ENCODE measurements at regions of chr9 and their contacts with region 1.

Region 1: DNA sequence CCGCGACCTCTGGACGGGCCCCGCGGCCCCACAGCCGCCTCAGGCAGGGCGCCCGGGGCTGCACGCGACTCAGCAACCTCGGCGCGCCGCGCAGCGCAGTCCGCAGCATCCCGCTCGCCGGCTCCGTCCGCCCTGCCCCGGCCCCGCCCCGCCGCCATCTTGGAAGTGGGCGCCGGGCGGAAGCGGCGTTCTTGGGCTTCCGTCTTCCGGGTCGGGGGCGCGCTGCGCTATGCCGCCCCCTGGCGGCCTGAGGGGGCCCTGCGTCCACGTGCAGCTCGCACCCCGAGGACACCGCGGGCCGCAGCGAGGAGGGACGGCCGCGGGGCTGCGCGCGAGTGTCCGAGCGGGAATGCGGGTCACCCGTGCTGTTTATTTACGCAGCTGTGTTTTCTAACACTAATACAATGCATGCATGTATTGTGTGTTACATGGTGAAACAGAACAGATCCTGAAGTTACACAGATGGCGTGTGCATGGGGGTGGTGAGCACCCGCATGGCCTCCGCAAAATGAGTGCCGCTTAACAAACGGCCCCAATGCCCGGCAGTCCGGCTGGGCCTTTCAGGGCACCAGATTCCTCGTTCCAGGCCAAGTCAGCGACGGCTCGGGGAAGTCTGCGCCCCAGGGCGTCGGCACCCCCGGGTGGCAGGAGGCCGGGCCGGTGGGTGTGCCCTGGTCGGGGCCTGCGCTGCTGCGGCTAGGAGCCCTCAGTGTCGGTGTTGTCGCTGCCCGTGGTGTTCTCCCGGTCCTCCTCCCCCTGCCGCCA is at the start of gene DNLZ:
- DNase-seq: peak; percentile 73
- H3K4me3 ChIP-seq: peak within 1 kb of the TSS; percentile 58 to 93 (median 72)
- H3K27ac ChIP-seq: no peak within 1 kb of the TSS
- H3K4me1 ChIP-seq: peaks cover 35% of the 10 kb centered on the region
- H3K27me3 ChIP-seq: no peaks in the 10 kb centered on the region
- CTCF ChIP-seq: peak; percentile 73 to 87
- total RNA-seq, gene DNLZ: 11.7 to 33.9 TPM

Region 2: DNA sequence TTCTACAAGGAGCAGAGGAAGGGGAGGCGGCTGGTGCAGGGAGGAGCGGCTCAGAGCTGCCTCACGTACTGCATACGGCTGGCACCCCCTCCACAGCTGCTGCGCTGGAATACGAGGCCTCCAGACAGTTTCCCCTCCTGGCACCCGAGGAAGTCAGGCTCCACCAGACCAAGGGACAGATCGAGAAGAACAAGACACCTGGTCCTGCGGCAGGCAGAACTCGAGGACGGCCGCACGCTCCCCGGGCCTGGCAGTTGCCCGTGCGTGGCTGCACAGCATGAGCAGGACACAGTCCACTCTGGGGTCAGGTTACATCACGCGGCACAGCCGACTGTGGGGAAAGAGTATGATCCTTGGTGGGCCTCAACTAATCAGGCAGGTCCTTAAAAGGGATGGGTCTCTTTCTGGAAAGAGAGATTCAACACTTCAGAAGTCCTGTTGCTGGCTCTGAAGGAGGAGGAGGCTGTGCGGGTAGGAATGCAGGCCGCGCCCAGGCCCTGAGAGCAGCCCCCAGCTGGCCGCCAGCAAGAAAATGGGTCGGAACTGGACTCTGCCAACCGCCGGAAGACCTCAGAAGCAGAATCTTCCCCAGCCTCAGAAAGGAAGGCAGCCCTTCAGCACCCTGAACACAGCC is 414.2 kb before region 1 on chr9:
- CTCF ChIA-PET with region 1: no interaction called
- dilution Hi-C with region 1: no loop called
- in situ Hi-C with region 1: no loop called
- intact Hi-C with region 1: no loop called
- DNase-seq: no peak
- H3K4me3 ChIP-seq: no peak overlapping the region
- H3K27ac ChIP-seq: no peak overlapping the region
- H3K4me1 ChIP-seq: peaks cover 30% of the 10 kb centered on the region
- H3K27me3 ChIP-seq: no peaks in the 10 kb centered on the region
- CTCF ChIP-seq: no peak

Region 3: GRCh38 chr9:136312436-136312835 is 51.4 kb before region 1 on chr9:
- CTCF ChIA-PET with region 1: no interaction called
- dilution Hi-C with region 1: loop called (anchors 5 kb)
- in situ Hi-C with region 1: no loop called
- intact Hi-C with region 1: loop called (anchors 1 kb)
- DNase-seq: no peak
- H3K4me3 ChIP-seq: no peak overlapping the region
- H3K27ac ChIP-seq: no peak overlapping the region
- H3K4me1 ChIP-seq: peaks cover 15% of the 10 kb centered on the region
- H3K27me3 ChIP-seq: no peaks in the 10 kb centered on the region
- CTCF ChIP-seq: peak; percentile 46 to 88

Region 4: GRCh38 chr9:136339173-136339957 is 24.4 kb before region 1 on chr9:
- CTCF ChIA-PET with region 1: no interaction called
- dilution Hi-C with region 1: no loop called
- in situ Hi-C with region 1: no loop called
- intact Hi-C with region 1: loop called (anchors 1 kb)
- DNase-seq: peak; percentile 38
- H3K4me3 ChIP-seq: no peak overlapping the region
- H3K27ac ChIP-seq: no peak overlapping the region
- H3K4me1 ChIP-seq: peaks cover 14% of the 10 kb centered on the region
- H3K27me3 ChIP-seq: no peaks in the 10 kb centered on the region
- CTCF ChIP-seq: peak; percentile 93

Region 5: GRCh38 chr9:136400038-136400834 is 36.4 kb after region 1 on chr9 and contains the start of gene SNAPC4:
- CTCF ChIA-PET with region 1: no interaction called
- dilution Hi-C with region 1: no loop called
- in situ Hi-C with region 1: no loop called
- intact Hi-C with region 1: loop called (anchors 1 kb)
- DNase-seq: peak; percentile 78
- H3K4me3 ChIP-seq: peak within 1 kb of the TSS; percentile 84 to 97 (median 89)
- H3K27ac ChIP-seq: peak within 1 kb of the TSS; percentile 64
- H3K4me1 ChIP-seq: peaks cover 15% of the 10 kb centered on the region
- H3K27me3 ChIP-seq: no peaks in the 10 kb centered on the region
- CTCF ChIP-seq: peak; percentile 72 to 79
- total RNA-seq, gene SNAPC4: 7.0 to 9.2 TPM

Region 6: DNA sequence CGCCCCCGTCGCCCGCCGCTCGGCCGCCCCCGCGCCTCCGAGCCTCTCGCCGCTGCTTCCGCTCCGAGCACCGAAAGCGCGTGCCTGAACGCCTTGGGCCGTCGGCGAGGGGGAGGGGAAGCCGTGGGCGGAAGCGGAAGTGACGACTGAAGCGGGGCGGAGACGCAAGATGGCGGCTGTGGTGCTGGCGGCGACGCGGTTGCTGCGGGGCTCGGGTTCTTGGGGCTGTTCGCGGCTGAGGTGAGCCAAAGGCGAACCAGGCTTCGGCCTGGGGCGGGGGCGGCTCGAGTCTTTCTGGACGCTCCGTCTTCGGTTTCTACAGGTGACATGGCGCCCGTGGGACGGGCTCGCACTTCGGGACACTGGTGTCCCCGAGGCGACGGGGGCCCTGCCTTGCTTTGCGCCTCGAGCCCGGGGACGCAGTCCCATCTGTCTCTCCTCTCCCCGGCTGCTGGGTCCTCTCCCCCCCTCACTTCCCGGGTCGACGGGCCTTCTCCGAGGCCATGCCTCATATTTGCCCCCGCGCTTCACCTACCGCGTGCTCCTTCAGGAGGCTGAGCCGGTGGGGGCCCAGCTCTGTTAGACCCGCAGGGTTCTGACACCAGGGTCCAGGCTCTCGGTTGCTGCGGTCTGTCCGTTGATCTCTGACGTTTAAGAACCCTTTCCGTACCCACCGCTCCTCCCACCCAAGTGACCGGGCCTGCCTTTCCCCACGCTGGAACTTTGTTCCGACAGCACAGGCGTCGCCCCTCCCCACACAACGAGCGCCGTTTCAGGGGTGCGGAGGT is 46.9 kb after region 1 on chr9 and contains the starts of genes ENTR1 and PMPCA:
- CTCF ChIA-PET with region 1: no interaction called
- dilution Hi-C with region 1: no loop called
- in situ Hi-C with region 1: no loop called
- intact Hi-C with region 1: no loop called
- DNase-seq: peak; percentile 86
- H3K4me3 ChIP-seq: peak within 1 kb of the TSS; percentile 68 to 96 (median 91)
- H3K27ac ChIP-seq: peak within 1 kb of the TSS; percentile 80
- H3K4me1 ChIP-seq: peaks cover 17% of the 10 kb centered on the region
- H3K27me3 ChIP-seq: no peaks in the 10 kb centered on the region
- CTCF ChIP-seq: no peak
- total RNA-seq, gene ENTR1: 28.5 to 62.0 TPM
- total RNA-seq, gene PMPCA: 41.7 to 68.8 TPM

Region 7: DNA sequence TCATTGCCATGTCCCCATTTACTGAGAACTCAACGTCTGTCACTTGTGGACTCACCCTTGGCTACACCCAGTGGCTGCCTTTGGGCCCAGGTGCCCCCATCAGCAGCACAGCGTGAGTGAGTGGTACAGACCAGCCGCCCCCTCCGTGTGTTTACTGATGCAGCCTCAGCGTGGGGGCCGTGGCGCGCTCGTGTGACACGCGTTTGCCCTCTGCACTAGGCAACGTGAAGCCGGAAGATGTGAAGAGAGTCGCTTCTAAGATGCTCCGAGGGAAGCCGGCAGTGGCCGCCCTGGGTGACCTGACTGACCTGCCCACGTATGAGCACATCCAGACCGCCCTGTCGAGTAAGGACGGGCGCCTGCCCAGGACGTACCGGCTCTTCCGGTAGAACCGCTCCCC is 59.1 kb after region 1 on chr9:
- CTCF ChIA-PET with region 1: no interaction called
- dilution Hi-C with region 1: no loop called
- in situ Hi-C with region 1: no loop called
- intact Hi-C with region 1: no loop called
- DNase-seq: no peak
- H3K4me3 ChIP-seq: no peak overlapping the region
- H3K27ac ChIP-seq: no peak overlapping the region
- H3K4me1 ChIP-seq: no peaks in the 10 kb centered on the region
- H3K27me3 ChIP-seq: no peaks in the 10 kb centered on the region
- CTCF ChIP-seq: no peak

Region 8: DNA sequence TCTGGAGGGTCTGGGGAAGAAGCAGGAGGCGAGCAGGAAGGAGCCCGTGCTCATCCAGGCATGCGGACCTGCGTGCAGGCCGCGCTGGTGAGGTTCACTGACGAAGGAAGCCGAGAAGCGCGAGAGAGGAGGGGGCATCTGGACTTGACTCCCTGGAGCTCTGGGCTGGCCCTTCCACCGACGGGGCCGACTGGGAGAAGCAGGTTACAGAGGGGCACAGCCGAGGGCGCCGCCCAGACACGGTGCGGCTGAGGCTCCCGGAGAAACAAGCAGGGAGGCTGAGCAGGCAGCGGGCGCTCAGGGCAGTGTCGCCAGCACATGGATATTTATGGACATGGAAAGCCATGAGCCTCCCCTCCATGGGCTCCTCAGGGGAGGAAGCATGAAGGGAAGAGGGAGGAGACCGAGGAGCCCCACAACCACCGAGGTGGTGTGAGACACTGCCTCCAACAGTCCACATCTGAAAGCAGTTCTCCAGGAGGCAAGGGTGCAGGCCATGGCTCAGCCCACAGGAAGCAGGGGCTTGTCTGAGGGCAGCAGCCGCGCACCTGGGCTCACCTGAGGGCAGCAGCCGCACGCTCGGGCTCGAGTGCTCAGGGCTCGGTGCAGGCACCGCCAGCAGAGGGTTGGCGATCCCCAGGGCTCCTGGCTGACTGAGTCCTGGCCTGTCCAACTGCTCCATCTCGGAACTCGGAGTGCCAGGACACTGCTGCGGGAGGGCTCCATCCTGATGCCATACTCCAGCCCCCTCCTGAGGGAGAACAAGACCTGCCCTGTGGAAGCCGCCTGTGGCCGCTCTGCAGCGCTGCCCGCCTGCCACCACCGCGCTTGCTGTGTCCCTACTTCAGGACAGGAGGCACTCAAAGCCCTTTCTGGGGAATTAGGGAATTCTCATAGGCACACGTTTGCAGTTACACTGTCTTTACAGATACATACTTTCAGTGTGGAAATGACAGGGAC is 91.5 kb after region 1 on chr9:
- CTCF ChIA-PET with region 1: no interaction called
- dilution Hi-C with region 1: no loop called
- in situ Hi-C with region 1: no loop called
- intact Hi-C with region 1: no loop called
- DNase-seq: no peak
- H3K4me3 ChIP-seq: no peak overlapping the region
- H3K27ac ChIP-seq: no peak overlapping the region
- H3K4me1 ChIP-seq: no peaks in the 10 kb centered on the region
- H3K27me3 ChIP-seq: no peaks in the 10 kb centered on the region
- CTCF ChIP-seq: no peak

Region 9: GRCh38 chr9:136558373-136558772 is 194.6 kb after region 1 on chr9:
- CTCF ChIA-PET with region 1: no interaction called
- dilution Hi-C with region 1: loop called (anchors 5 kb)
- in situ Hi-C with region 1: no loop called
- intact Hi-C with region 1: no loop called
- DNase-seq: peak; percentile 49
- H3K4me3 ChIP-seq: no peak overlapping the region
- H3K27ac ChIP-seq: no peak overlapping the region
- H3K4me1 ChIP-seq: peaks cover 6% of the 10 kb centered on the region
- H3K27me3 ChIP-seq: no peaks in the 10 kb centered on the region
- CTCF ChIP-seq: no peak

Measured in mammary epithelial cell (primary cell).